SK-N-SH (cell line): ENCODE measurements at regions of chr6 and their contacts with region 1.

Region 1: GRCh38 chr6:113879186-113880096 is 22.3 kb downstream of the MARCKS start:
- DNase-seq: peak; percentile 56
- H3K4me3 ChIP-seq: no peak overlapping the region; a peak in 1 of 4 replicates
- H3K27ac ChIP-seq: peak overlapping the region; percentile 63 to 78; a peak in 3 of 4 replicates
- H3K4me1 ChIP-seq: peaks cover 0 to 5% of the 10 kb centered on the region in 2 experiments; a peak in 2 of 4 replicates
- H3K27me3 ChIP-seq: no peaks in the 10 kb centered on the region
- CTCF ChIP-seq: peak; percentile 89
- EP300 ChIP-seq: no peak
- RAD21 ChIP-seq: peak; percentile 96

Region 2: GRCh38 chr6:112786801-112787200 is 1092.6 kb before region 1 on chr6:
- CTCF ChIA-PET with region 1: interaction called, 15 read pairs
- POLR2A ChIA-PET with region 1: no interaction called
- DNase-seq: no peak
- H3K4me3 ChIP-seq: no peak overlapping the region
- H3K27ac ChIP-seq: peak overlapping the region; percentile 47 to 86; a peak in 3 of 4 replicates
- H3K4me1 ChIP-seq: no peaks in the 10 kb centered on the region; a peak in 1 of 4 replicates
- H3K27me3 ChIP-seq: no peaks in the 10 kb centered on the region
- CTCF ChIP-seq: no peak
- EP300 ChIP-seq: peak; percentile 63 to 98
- RAD21 ChIP-seq: no peak

Region 3: GRCh38 chr6:113697632-113698410 is 181.6 kb before region 1 on chr6:
- CTCF ChIA-PET with region 1: no interaction called
- POLR2A ChIA-PET with region 1: no interaction called
- DNase-seq: no peak
- H3K4me3 ChIP-seq: no peak overlapping the region
- H3K27ac ChIP-seq: no peak overlapping the region
- H3K4me1 ChIP-seq: no peaks in the 10 kb centered on the region
- H3K27me3 ChIP-seq: no peaks in the 10 kb centered on the region
- CTCF ChIP-seq: no peak
- EP300 ChIP-seq: no peak
- RAD21 ChIP-seq: no peak

Region 4: GRCh38 chr6:113909234-113909856 is 29.9 kb after region 1 on chr6:
- CTCF ChIA-PET with region 1: interaction called, 18 read pairs
- POLR2A ChIA-PET with region 1: no interaction called
- DNase-seq: peak; percentile 63
- H3K4me3 ChIP-seq: peak overlapping the region in 1 of 2 experiments; percentile 36; a peak in 1 of 4 replicates
- H3K27ac ChIP-seq: no peak overlapping the region
- H3K4me1 ChIP-seq: peaks cover 0 to 2% of the 10 kb centered on the region in 2 experiments; a peak in 1 of 4 replicates
- H3K27me3 ChIP-seq: no peaks in the 10 kb centered on the region
- CTCF ChIP-seq: peak; percentile 81
- EP300 ChIP-seq: no peak
- RAD21 ChIP-seq: peak; percentile 87

Region 5: DNA sequence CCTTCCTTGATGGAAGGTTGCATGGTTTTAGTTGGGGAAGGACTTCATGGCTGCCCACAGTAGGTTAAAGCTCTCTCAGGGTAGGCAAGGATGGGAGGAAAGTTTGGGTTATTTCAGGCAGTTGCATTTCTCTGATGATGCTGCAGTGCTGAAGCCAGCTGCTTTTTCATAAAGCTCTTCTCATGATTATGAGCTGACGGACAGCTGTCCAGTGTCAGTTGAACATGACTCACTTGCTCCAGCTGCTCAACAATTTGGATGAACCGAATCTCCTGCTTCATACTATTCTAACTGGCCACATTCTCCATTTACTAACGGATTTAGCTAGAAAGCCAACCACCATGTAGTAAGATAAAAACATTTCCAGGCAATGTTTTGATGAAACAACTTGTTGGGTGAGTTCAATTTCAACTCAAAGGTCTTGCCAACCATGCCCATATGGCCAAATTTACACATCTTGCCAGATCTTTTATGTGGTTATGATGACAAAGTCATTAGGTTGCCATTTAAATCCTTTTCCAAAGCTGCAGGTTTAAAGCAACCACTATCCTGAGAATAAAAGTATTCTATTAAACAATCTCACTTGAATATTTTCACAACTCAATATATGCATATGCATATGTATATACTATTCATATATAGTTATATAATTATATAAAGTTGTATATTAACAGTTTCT is 337.5 kb after region 1 on chr6:
- CTCF ChIA-PET with region 1: no interaction called
- POLR2A ChIA-PET with region 1: no interaction called
- DNase-seq: no peak
- H3K4me3 ChIP-seq: no peak overlapping the region
- H3K27ac ChIP-seq: no peak overlapping the region
- H3K4me1 ChIP-seq: no peaks in the 10 kb centered on the region
- H3K27me3 ChIP-seq: no peaks in the 10 kb centered on the region
- CTCF ChIP-seq: no peak
- EP300 ChIP-seq: no peak
- RAD21 ChIP-seq: no peak